Naive thymus-derived CD8-positive, alpha-beta T cell (primary cell): ENCODE measurements at regions of chr19 and their contacts with region 1.

Region 1: DNA sequence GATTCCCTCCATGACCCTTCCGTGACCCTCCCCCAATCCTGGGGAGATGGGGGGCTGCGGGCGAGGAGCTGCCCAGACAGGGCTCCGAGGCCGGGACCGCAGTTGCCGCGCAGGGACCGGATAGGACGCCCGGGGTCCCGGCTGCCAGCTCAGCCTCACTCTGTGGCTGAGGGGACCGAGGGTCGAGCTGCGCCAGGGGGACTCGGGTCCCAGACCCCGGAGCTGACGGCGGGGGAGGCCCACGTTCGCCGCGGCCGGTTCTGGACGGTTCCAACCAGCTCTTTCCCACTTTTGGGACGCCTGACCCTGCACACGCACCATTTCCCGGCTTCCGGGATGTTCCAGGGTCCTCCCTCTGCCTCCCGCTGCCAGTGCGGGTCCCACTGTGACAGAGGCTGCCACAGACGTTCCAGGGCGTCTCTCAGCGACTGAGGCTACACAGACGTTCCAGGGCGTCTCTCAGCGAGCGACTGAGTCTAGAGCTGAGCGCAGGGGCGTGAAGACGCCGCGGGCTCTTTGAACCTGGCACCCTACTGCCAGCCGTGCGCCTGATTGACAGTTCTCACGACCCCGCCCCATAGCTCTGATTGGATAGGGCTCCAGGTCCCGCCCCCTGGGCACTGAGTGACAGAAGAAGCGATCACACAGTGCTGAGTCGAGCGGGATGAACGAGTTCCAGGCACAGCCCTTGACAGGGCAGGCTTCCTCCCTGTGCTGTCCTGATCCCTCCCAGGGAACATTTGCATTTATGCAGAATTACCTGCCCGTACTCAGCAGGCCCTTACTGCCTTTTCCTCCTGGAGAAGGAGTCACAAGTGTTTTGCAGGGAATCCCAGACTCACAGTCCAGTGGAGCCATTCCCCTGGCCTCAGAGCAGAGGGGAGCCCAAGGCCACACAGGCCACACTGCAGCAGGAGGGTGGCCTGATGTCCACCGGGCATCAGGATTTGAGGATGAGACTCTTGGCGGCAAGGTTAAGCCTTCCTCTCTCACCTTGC is at the start of gene ZNF563:
- DNase-seq: peak; percentile 91 to 99 (median 98)
- ATAC-seq: peak; percentile 91 to 95
- H3K4me3 Mint-ChIP-seq: peak within 1 kb of the TSS; percentile 88 to 100 (median 98)
- H3K27ac Mint-ChIP-seq: peak within 1 kb of the TSS; percentile 90 to 99 (median 98)
- H3K4me1 Mint-ChIP-seq: peaks cover 29 to 45% (median 43%) of the 10 kb centered on the region in 4 donors
- H3K27me3 Mint-ChIP-seq: no peaks in the 10 kb centered on the region
- polyA plus RNA-seq, gene ZNF563: 3.4 to 6.2 (median 4.3) TPM

Region 2: GRCh38 chr19:12162882-12163806 is 170.3 kb before region 1 on chr19 and contains the start of gene ZNF136:
- POLR2A ChIA-PET with region 1: interaction called, 23 read pairs
- DNase-seq: peak; percentile 83 to 97 (median 91)
- ATAC-seq: peak; percentile 99
- H3K4me3 Mint-ChIP-seq: peak within 1 kb of the TSS; percentile 93 to 100 (median 97)
- H3K27ac Mint-ChIP-seq: peak within 1 kb of the TSS; percentile 96 to 99 (median 98)
- H3K4me1 Mint-ChIP-seq: peaks cover 18 to 52% (median 51%) of the 10 kb centered on the region in 4 donors
- H3K27me3 Mint-ChIP-seq: no peaks in the 10 kb centered on the region
- polyA plus RNA-seq, gene ZNF136: 17.8 to 22.6 (median 19.9) TPM

Region 3: GRCh38 chr19:12278713-12279112 is 54.7 kb before region 1 on chr19:
- POLR2A ChIA-PET with region 1: interaction called, 19 read pairs
- DNase-seq: peak in 1 of 10 donors; percentile 27
- ATAC-seq: peak; percentile 50 to 80
- H3K4me3 Mint-ChIP-seq: peak overlapping the region in 9 of 10 donors; percentile 12 to 73 (median 55)
- H3K27ac Mint-ChIP-seq: peak overlapping the region in 9 of 10 donors; percentile 16 to 93 (median 61)
- H3K4me1 Mint-ChIP-seq: peaks cover 10 to 59% (median 46%) of the 10 kb centered on the region in 4 donors
- H3K27me3 Mint-ChIP-seq: no peaks in the 10 kb centered on the region

Region 4: DNA sequence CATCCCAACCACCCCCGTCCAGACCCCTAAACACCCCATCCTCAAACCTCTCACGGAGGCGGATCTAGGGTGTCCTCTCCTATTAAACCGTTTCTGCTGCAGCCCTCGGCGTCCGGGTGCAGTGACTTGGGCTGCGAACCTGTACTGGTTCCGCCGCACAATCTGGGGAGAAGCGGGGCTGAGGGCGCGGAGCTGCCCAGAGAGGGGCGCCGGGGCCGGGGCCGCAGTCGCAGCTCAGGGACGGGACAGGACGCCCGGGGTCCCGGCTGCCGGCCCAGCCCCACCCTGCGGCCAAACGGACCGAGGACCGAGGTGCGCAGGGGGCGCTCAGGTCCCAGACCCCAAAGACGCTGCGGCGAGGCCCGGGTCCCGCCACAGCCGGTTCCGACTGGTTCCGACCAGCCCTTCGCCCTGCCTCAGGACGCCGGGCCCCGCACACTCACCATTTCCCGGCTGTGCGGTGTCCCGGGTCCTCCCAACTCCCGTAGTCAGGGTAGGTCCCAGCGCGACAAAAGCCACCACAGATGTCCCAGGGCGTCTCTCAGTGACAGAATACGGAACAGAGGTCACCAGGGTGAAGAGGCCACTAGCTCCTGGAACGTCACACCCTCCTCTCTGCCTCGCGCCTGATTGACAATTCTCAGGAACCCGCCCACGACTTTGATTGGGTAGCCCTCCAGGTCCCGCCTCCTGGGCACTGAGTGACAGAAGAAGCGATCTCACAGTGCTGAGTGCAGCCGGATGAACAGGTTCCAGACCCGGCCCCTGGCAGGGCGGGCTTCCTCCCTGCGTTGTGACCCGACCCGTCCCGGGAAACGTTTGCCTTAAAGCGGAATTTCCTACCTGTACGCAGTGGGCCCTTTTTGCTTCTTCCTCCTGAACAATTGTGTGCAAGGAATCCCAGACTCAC is 39.0 kb before region 1 on chr19 and contains the start of gene ZNF44:
- POLR2A ChIA-PET with region 1: interaction called, 135 read pairs
- DNase-seq: peak; percentile 82 to 98 (median 95)
- ATAC-seq: peak; percentile 94 to 98
- H3K4me3 Mint-ChIP-seq: peak within 1 kb of the TSS; percentile 91 to 100 (median 98)
- H3K27ac Mint-ChIP-seq: peak within 1 kb of the TSS; percentile 91 to 99 (median 98)
- H3K4me1 Mint-ChIP-seq: peaks cover 20 to 44% (median 40%) of the 10 kb centered on the region in 4 donors
- H3K27me3 Mint-ChIP-seq: no peaks in the 10 kb centered on the region
- polyA plus RNA-seq, gene ZNF44: 15.4 to 23.4 (median 20.9) TPM

Region 5: GRCh38 chr19:12365236-12366162 is 32.0 kb after region 1 on chr19 and contains the start of gene ZNF442:
- POLR2A ChIA-PET with region 1: interaction called, 50 read pairs
- DNase-seq: peak; percentile 70 to 95 (median 84)
- ATAC-seq: peak; percentile 97 to 99
- H3K4me3 Mint-ChIP-seq: peak within 1 kb of the TSS; percentile 93 to 99 (median 97)
- H3K27ac Mint-ChIP-seq: peak within 1 kb of the TSS; percentile 77 to 97 (median 94)
- H3K4me1 Mint-ChIP-seq: peaks cover 5 to 37% (median 23%) of the 10 kb centered on the region in 4 donors
- H3K27me3 Mint-ChIP-seq: no peaks in the 10 kb centered on the region
- polyA plus RNA-seq, gene ZNF442: 0.88 to 2.6 (median 1.7) TPM

Region 6: GRCh38 chr19:12440541-12441316 is 107.3 kb after region 1 on chr19 and contains the start of gene ZNF443:
- POLR2A ChIA-PET with region 1: interaction called, 18 read pairs
- DNase-seq: peak; percentile 90 to 99 (median 98)
- ATAC-seq: peak; percentile 93 to 98
- H3K4me3 Mint-ChIP-seq: peak within 1 kb of the TSS; percentile 98 to 100 (median 100)
- H3K27ac Mint-ChIP-seq: peak within 1 kb of the TSS; percentile 91 to 99 (median 96)
- H3K4me1 Mint-ChIP-seq: peaks cover 10 to 29% (median 13%) of the 10 kb centered on the region in 4 donors
- H3K27me3 Mint-ChIP-seq: no peaks in the 10 kb centered on the region
- polyA plus RNA-seq, gene ZNF443: 1.1 to 3.6 (median 2.0) TPM

Region 7: DNA sequence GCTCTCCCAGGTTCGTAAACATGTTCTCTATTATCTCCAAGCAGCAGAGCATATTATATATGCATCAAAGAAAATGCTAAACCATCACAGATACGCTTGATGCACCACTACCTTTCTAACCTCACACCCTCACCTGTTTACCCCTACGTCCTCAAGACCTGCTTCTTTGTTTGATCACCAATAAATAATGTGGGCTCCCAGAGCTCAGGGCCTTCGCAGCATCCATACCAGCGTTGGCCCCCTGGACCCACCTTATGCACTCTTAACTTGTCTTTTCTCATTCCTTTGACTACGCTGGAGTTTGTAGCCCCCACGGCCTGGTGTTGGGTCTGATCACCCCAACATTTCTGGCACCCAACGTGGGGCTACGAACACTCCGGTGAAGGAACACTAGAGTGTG is 117.4 kb after region 1 on chr19:
- POLR2A ChIA-PET with region 1: no interaction called
- DNase-seq: no peak
- ATAC-seq: no peak
- H3K4me3 Mint-ChIP-seq: no peak overlapping the region
- H3K27ac Mint-ChIP-seq: peak overlapping the region in 1 of 10 donors; percentile 62
- H3K4me1 Mint-ChIP-seq: peaks cover 0 to 2% (median 0%) of the 10 kb centered on the region in 4 donors
- H3K27me3 Mint-ChIP-seq: no peaks in the 10 kb centered on the region

Region 8: DNA sequence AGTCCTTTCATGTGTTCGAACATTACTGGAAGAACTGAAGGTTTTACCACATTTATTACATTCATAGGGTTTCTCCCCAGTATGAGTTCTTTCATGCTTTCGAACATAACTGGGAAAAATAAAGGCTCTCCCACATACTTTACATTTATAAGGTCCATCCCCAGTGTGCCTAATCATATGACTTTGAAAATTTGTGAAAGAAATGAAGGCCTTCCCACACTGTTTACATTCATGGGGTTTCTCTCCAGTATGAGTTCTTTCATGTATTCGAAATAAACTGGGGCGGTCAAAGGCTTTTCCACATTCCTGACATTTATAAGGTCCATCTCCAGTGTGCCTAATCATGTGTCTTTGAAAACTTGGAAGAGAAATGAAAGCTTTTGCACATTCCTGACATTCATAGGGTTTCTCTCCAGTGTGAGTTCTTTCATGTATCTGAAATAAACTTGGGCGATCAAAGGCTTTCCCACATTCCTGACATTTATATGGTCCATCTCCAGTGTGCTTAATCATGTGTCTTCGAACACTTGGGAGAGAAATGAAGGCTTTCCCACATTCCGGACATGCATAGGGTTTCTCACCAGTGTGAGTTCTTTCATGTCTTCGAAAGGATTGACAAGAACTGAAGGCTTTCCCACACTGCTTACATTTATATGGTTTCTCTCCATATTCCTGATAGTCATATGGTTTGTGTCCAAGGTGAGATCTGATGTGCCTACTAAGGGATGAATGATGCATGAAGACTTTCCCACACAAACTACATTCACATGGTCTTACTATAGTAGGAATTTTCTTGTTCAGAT is 193.8 kb after region 1 on chr19:
- POLR2A ChIA-PET with region 1: no interaction called
- DNase-seq: peak in 3 of 10 donors; percentile 13 to 32 (median 19)
- ATAC-seq: no peak
- H3K4me3 Mint-ChIP-seq: peak overlapping the region in 1 of 10 donors; percentile 34
- H3K27ac Mint-ChIP-seq: peak overlapping the region in 1 of 10 donors; percentile 69
- H3K4me1 Mint-ChIP-seq: peaks cover 0 to 4% (median 0%) of the 10 kb centered on the region in 4 donors
- H3K27me3 Mint-ChIP-seq: no peaks in the 10 kb centered on the region